A673 (cell line): ENCODE measurements at regions of chr1 and their contacts with region 1.

Region 1: DNA sequence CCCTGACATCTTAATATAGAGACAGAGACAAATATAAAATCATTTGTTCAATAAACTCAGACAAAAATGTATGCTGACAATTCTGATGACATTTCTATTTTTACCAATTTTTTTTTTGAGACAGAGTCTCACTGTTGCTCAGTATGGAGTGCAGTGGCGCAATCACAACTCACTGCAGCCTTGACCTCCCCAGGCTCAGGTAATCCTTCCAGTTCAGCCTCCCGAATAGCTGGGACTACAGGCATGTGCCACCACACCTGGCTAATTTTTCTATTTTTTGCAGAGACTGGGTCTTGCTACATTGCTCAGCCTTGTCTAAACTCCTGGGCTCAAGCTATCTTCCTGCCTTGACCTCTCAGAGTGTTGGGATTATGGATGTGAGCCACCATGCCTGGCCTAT is 13.6 kb upstream of the SIKE1 start:
- DNase-seq: no peak
- H3K4me3 ChIP-seq: no peak overlapping the region
- H3K27ac ChIP-seq: no peak overlapping the region
- H3K4me1 ChIP-seq: no peaks in the 10 kb centered on the region
- H3K27me3 ChIP-seq: peaks cover 53% of the 10 kb centered on the region
- CTCF ChIP-seq: no peak

Region 2: DNA sequence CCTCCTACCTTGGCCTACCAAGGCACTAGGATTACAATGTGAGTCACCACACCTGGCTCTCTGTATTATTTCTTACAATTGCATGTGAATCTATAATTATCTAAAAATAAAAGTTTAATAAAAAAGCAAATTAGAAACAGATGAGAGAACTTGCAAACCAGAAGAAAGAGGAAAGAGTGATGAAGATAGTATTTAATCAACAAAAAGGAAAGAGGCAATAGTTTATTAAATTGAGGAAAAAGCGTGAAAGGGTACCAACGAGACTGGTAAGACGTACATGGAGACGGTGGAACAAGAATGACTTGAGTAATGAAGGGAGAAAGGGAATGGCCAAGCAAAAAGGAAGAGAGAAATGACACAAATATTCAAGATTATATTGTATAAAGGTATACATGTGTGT is 225.0 kb before region 1 on chr1:
- CTCF ChIA-PET with region 1: no interaction called
- POLR2A ChIA-PET with region 1: interaction called, 13 read pairs
- intact Hi-C with region 1: no loop called
- DNase-seq: no peak
- H3K4me3 ChIP-seq: no peak overlapping the region
- H3K27ac ChIP-seq: no peak overlapping the region
- H3K4me1 ChIP-seq: no peaks in the 10 kb centered on the region
- H3K27me3 ChIP-seq: no peaks in the 10 kb centered on the region
- CTCF ChIP-seq: no peak

Region 3: DNA sequence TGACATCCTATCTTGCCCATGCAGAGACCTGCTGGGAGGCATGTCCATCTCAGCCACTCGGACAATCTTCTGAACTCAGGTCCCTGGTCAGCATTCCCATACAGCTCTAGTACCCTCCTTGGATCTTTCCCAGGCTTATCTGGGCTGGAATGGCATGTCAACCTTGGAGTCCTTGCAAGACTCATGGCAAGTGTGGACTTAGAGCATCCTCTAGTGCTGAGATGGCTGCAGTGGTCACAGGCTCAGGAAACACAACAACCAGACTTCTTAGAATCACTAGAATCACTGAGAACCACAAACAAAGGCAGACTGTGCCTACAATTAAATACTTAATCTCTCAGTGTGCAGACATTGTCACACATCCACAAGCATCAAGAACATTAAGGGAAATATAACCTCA is 162.5 kb after region 1 on chr1:
- CTCF ChIA-PET with region 1: no interaction called
- POLR2A ChIA-PET with region 1: no interaction called
- intact Hi-C with region 1: no loop called
- DNase-seq: peak; percentile 17
- H3K4me3 ChIP-seq: no peak overlapping the region
- H3K27ac ChIP-seq: no peak overlapping the region
- H3K4me1 ChIP-seq: no peaks in the 10 kb centered on the region
- H3K27me3 ChIP-seq: no peaks in the 10 kb centered on the region
- CTCF ChIP-seq: peak; percentile 44